HepG2 (cell line): ENCODE measurements at regions of chr2 and their contacts with region 1.

Region 1: DNA sequence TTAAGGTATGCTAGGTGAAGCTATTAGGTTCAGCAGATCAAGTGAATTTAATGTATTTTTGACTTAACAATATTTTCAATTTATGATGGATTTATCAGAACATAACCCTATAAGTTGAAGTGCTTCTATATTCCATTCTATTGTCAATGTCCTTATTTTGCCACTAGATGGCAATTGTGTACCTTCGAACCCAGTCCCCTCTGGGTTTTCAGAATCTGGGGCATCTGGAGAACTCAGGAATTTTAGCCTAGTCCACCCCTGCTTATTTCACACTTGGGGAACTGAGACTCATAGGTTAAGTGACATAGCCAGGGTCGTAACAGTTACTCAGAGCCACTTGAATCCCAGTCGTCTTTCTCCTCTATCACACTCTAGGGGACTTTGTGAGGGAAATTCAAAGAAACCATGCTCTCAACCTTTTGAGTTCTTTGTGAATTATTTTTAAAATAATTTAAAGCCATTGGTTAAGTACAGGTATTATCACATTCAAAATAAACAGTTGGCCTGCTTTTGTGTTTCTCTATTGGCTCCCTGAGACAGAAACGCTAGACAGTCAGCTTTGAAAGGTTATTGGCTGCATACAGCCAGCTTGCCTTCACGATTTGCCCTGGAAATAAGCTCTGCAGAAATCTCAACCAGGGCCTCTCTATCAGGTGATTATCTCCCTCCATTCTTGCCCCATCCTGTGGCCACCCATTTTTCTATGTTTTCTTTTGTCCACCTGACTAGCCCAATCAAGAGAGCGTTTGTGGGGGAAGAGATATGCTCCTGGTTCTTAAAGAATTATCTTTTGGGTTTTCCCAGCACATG is 145.0 kb downstream of the TTC27 start:
- DNase-seq: peak; percentile 48
- ATAC-seq: peak; percentile 87
- H3K4me3 ChIP-seq: no peak overlapping the region
- H3K27ac ChIP-seq: no peak overlapping the region
- H3K4me1 ChIP-seq: peaks cover 9% of the 10 kb centered on the region
- H3K27me3 ChIP-seq: no peaks in the 10 kb centered on the region
- CTCF ChIP-seq: peak; percentile 85
- EP300 ChIP-seq: no peak
- POLR2A ChIP-seq: no peak
- RAD21 ChIP-seq: peak; percentile 89

Region 2: GRCh38 chr2:31920962-31921361 is 851.9 kb before region 1 on chr2:
- CTCF ChIA-PET with region 1: no interaction called
- POLR2A ChIA-PET with region 1: no interaction called
- in situ Hi-C with region 1: no loop called
- intact Hi-C with region 1: no loop called
- DNase-seq: no peak
- ATAC-seq: no peak
- H3K4me3 ChIP-seq: no peak overlapping the region
- H3K27ac ChIP-seq: no peak overlapping the region
- H3K4me1 ChIP-seq: peaks cover 20% of the 10 kb centered on the region
- H3K27me3 ChIP-seq: no peaks in the 10 kb centered on the region
- CTCF ChIP-seq: no peak
- EP300 ChIP-seq: no peak
- POLR2A ChIP-seq: no peak
- RAD21 ChIP-seq: no peak

Region 3: DNA sequence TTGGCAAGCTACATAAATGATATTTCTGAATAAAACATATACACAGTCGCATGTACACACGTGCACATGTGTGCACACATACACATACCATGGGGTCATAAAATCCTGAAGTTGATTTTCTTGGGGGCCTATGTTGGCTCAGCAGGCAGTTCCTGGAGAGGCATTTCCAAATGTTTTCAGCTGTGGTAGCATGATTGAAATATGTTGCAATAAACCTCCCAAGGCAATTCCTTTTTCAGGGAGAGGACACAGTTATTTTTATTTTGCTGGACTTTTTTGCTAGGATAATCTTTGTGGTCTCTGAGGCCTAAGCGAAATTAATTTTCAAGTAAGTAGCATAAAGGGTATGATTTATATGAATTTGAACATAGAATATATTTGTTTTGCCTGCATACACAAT is 47.2 kb after region 1 on chr2:
- CTCF ChIA-PET with region 1: no interaction called
- POLR2A ChIA-PET with region 1: no interaction called
- in situ Hi-C with region 1: no loop called
- intact Hi-C with region 1: no loop called
- DNase-seq: no peak
- ATAC-seq: no peak
- H3K4me3 ChIP-seq: no peak overlapping the region
- H3K27ac ChIP-seq: no peak overlapping the region
- H3K4me1 ChIP-seq: no peaks in the 10 kb centered on the region
- H3K27me3 ChIP-seq: no peaks in the 10 kb centered on the region
- CTCF ChIP-seq: no peak
- EP300 ChIP-seq: no peak
- POLR2A ChIP-seq: no peak
- RAD21 ChIP-seq: no peak

Region 4: GRCh38 chr2:32946314-32947075 is 173.7 kb after region 1 on chr2 and contains the start of gene LTBP1:
- CTCF ChIA-PET with region 1: interaction called, 27 read pairs
- POLR2A ChIA-PET with region 1: no interaction called
- in situ Hi-C with region 1: loop called (anchors 5 kb)
- intact Hi-C with region 1: loop called (anchors 1 kb)
- DNase-seq: peak; percentile 42
- ATAC-seq: peak; percentile 96
- H3K4me3 ChIP-seq: peak within 1 kb of the TSS; percentile 27 to 72 (median 54)
- H3K27ac ChIP-seq: no peak within 1 kb of the TSS
- H3K4me1 ChIP-seq: no peaks in the 10 kb centered on the region
- H3K27me3 ChIP-seq: peaks cover 6 to 35% of the 10 kb centered on the region in 2 experiments; a peak in 4 of 5 replicates
- CTCF ChIP-seq: peak; percentile 92
- EP300 ChIP-seq: no peak
- POLR2A ChIP-seq: no peak
- RAD21 ChIP-seq: peak; percentile 84
- total RNA-seq, gene LTBP1: 0.22 and 0.34 TPM in 2 replicates

Region 5: GRCh38 chr2:33275689-33276444 is 503.0 kb after region 1 on chr2:
- CTCF ChIA-PET with region 1: no interaction called
- POLR2A ChIA-PET with region 1: no interaction called
- in situ Hi-C with region 1: no loop called
- intact Hi-C with region 1: loop called (anchors 2 kb)
- DNase-seq: peak; percentile 78
- ATAC-seq: peak; percentile 95
- H3K4me3 ChIP-seq: no peak overlapping the region
- H3K27ac ChIP-seq: no peak overlapping the region
- H3K4me1 ChIP-seq: peaks cover 12% of the 10 kb centered on the region
- H3K27me3 ChIP-seq: 0 out of 5 replicates have a peak, but pooled peaks cover 0 to 5% of the 10 kb centered on the region in 2 experiments
- CTCF ChIP-seq: no peak
- EP300 ChIP-seq: peak in 1 of 2 experiments; percentile 82; a peak in 1 of 4 replicates
- POLR2A ChIP-seq: no peak
- RAD21 ChIP-seq: no peak

Region 6: GRCh38 chr2:33441235-33441810 is 668.5 kb after region 1 on chr2:
- CTCF ChIA-PET with region 1: no interaction called
- POLR2A ChIA-PET with region 1: no interaction called
- in situ Hi-C with region 1: no loop called
- intact Hi-C with region 1: loop called (anchors 1 kb)
- DNase-seq: peak; percentile 34
- ATAC-seq: peak; percentile 97
- H3K4me3 ChIP-seq: no peak overlapping the region
- H3K27ac ChIP-seq: no peak overlapping the region
- H3K4me1 ChIP-seq: 0 out of 2 replicates have a peak, but pooled peaks cover 6% of the 10 kb centered on the region
- H3K27me3 ChIP-seq: peaks cover 0 to 5% of the 10 kb centered on the region in 2 experiments; a peak in 1 of 5 replicates
- CTCF ChIP-seq: peak; percentile 73
- EP300 ChIP-seq: no peak
- POLR2A ChIP-seq: no peak
- RAD21 ChIP-seq: peak; percentile 65; the same call in 1 of the 2 replicates

Region 7: DNA sequence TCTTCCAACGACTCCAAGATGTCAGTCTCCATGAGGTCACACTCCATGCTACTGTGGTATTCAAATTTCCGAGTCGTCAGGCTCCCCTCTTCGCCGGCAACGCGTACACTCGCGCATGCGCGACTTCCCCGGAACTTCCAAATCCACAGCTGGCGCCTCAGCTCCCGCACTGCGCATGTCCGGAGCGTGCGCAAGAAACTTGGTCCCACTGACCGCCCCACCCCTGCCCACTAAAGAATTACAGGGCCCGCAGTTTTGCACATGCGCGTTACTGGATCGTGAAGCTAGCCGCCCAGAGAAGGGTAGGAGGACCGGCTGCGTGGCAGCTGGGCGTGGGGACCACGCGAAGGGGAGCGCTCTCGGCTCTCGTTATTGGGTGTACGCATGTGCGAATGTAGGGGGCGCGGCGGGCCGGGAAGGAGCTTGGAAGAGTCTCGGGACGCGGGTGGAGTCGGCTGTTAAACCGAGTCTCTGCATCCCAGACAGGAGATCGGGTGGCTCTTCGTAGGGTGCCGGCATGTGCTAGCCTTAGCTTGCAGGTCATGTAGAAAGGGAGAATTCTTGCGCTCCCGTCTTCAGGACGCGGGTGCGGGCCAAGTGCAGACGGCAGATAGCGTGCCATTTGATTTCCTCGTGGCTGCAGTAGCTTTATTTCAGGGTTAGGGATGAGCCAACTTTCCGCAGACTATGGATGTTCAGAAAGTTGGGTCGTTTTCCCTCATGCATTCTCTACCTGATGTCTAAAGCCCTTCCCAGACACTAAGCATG is 826.5 kb after region 1 on chr2 and contains the start of gene FAM98A:
- CTCF ChIA-PET with region 1: no interaction called
- POLR2A ChIA-PET with region 1: no interaction called
- in situ Hi-C with region 1: loop called (anchors 25 kb)
- intact Hi-C with region 1: no loop called
- DNase-seq: peak; percentile 99
- ATAC-seq: peak; percentile 92
- H3K4me3 ChIP-seq: peak within 1 kb of the TSS; percentile 85 to 100 (median 86)
- H3K27ac ChIP-seq: peak within 1 kb of the TSS; percentile 70
- H3K4me1 ChIP-seq: peaks cover 32% of the 10 kb centered on the region
- H3K27me3 ChIP-seq: no peaks in the 10 kb centered on the region; a peak in 1 of 5 replicates
- CTCF ChIP-seq: peak; percentile 63
- EP300 ChIP-seq: no peak
- POLR2A ChIP-seq: peak; percentile 77 to 87
- RAD21 ChIP-seq: 0 out of 2 replicates have a peak, but pooled peaks have one; percentile 37
- total RNA-seq, gene FAM98A: 61.4 and 104 TPM in 2 replicates